HCT116 (cell line): ENCODE measurements at regions of chr10 and their contacts with region 1.

Region 1: GRCh38 chr10:16030562-16030961 is 170.3 kb upstream of the MINDY3 start:
- DNase-seq: no peak
- ATAC-seq: no peak
- H3K4me3 ChIP-seq: no peak overlapping the region
- H3K27ac ChIP-seq: no peak overlapping the region
- H3K4me1 ChIP-seq: no peaks in the 10 kb centered on the region
- H3K27me3 ChIP-seq: peaks cover 37% of the 10 kb centered on the region
- CTCF ChIP-seq: no peak
- POLR2A ChIP-seq: no peak
- RAD21 ChIP-seq: no peak

Region 2: GRCh38 chr10:16519908-16520861 is 489.6 kb after region 1 on chr10:
- CTCF ChIA-PET with region 1: no interaction called
- POLR2A ChIA-PET with region 1: no interaction called
- RAD21 ChIA-PET with region 1: no interaction called
- intact Hi-C with region 1: loop called (anchors 10 kb)
- DNase-seq: no peak
- ATAC-seq: no peak
- H3K4me3 ChIP-seq: no peak overlapping the region
- H3K27ac ChIP-seq: no peak overlapping the region
- H3K4me1 ChIP-seq: no peaks in the 10 kb centered on the region
- H3K27me3 ChIP-seq: no peaks in the 10 kb centered on the region
- CTCF ChIP-seq: no peak
- POLR2A ChIP-seq: no peak
- RAD21 ChIP-seq: no peak